Activated CD4-positive, alpha-beta memory T cell treated with anti-CD3 and anti-CD28 coated beads, Interleukin-2, amount 10 ng/mL, durations not matched to agents 7 days and 5 days (primary cell): ENCODE measurements at regions of chr17 and their contacts with region 1.

Region 1: DNA sequence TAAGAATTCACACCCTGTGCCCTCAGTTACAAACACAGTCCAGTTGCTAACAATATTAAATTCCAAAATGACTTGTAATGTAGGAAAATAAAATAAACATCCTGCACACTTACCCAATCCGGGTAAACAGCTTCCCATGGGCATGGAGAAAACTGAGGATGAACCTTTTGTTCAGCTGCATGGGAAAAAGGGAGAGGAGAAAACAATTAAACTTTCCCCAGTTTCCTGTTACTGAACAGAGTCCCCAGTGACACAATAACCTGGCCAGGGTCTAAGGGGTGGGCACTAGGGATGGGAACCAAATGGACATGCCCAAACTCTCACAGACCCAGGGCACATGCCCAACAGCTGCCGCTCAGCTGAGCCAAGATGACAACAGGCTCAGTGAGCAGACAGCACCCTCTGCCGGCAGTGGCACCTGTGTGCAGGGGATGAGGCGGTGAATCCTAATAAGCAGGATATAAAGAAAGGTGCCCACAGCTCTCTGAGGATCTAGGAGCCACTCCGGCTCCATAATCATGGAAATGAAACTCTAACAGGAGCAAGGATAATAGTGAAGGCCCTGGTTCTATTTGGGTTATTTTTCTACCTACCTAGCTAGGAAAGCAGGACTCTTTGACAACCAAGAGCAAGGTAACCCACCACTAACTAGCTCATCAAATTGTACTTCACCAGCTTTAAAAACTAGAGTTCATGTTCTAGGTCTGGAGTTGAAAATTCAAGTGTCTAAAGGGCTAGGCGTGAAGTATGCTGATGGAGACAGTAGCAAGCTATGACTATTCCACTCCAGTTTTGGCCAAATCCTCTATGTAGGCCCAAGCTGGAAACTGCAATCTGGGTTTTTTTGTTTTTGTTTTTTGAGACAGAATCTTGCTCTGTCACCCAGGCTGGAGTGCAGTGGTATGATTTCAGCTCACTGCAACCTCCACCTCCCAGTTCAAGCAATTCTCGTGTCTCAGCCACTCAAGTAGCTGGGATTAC is 58.8 kb downstream of the SMG6 start:
- DNase-seq: peak; percentile 87
- H3K4me3 Mint-ChIP-seq: no peak overlapping the region
- H3K27ac Mint-ChIP-seq: peak overlapping the region; percentile 69
- H3K4me1 Mint-ChIP-seq: peaks cover 70% of the 10 kb centered on the region
- H3K27me3 Mint-ChIP-seq: no peaks in the 10 kb centered on the region

Region 2: DNA sequence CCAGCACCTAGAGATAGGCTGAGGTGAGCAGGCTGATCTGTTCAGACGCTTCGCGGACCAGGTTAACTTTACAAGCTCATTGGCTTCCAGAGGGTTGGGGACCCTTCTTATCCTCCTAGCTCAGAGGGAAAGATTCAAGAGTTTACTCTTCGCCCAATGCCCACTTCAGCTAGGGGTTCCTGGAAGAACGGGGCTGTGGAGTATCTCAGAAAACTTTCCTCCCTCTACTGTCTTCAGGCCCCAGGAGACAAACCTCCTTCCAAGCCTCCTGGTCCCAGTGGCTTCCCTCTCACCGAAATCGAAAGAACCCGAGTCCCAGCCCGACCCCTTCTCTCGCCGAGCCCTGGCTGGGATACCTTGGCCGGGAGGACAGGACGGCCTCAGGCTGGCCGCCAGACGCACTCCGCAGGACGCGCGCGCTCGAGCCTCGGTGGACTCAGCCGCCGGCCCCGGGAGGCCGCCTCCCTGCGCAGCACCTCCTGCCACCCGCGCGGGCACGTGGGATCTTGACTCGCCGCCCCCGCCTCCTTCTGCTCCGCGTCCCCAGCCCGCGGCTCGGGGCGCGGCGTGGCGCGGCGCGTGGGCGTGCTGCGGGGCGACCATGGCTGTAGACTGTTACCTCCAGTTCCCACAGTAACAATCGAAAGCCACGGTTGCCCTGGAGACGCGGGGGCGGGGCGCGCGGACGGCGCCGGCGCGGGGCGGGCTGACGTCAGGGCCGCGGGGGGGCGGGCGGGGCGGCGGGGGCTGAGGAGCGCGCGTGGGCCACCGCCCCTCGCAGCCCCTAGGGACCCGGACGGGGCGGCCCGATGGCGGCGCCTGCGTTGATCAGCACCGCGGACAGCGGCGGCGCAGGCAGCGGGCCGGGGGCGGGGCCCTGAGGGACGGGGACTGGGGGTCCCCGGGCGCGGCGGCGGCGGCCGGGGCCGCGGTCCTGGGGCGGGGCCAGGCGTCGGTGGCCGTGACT is 195.2 kb before region 1 on chr17:
- CTCF ChIA-PET with region 1: interaction called, 210 read pairs
- POLR2A ChIA-PET with region 1: interaction called, 94 read pairs
- DNase-seq: peak; percentile 91
- H3K4me3 Mint-ChIP-seq: peak overlapping the region; percentile 65
- H3K27ac Mint-ChIP-seq: no peak overlapping the region
- H3K4me1 Mint-ChIP-seq: peaks cover 28% of the 10 kb centered on the region
- H3K27me3 Mint-ChIP-seq: peaks cover 22% of the 10 kb centered on the region

Region 3: DNA sequence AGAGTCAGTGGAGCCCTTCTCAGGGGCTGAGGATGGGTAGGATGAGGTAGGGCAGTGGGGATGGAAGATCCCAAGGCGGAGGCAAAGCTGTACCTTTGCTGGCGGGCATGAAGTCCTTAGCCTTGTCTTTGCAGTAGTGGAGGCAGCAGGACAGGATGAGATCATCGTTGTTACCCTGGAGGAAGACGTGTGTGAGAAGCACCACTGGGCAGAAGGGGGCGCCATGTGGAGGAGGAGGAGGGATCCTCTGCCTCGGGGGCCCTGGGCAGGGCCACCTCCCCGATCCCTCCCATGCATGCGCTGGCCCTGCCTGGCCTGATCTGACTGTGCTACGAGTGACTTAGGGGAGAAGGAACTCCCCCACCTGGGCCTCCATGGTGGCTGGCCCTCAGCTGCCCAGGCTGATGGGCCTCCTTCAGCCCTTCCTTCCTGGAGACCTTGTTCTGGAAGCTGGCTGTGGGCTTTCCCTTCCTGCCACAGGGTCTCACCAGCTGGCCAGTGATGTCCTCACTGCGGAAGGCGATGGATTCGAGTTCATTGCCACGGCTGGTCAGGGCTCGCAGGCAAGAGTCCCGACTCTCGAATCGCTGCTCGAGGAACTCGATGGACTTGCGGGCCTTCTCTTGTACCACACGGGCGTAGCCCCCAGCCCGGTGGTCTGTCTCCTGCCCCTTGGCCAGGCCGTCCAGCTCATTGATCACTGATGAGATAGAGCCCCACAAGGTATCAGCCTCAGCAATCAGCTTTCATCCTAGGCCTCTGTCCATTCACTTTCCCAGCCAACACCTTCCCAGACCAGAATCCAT is 179.7 kb before region 1 on chr17:
- CTCF ChIA-PET with region 1: interaction called, 210 read pairs
- POLR2A ChIA-PET with region 1: interaction called, 3 read pairs
- DNase-seq: peak; percentile 80
- H3K4me3 Mint-ChIP-seq: no peak overlapping the region
- H3K27ac Mint-ChIP-seq: peak overlapping the region; percentile 74
- H3K4me1 Mint-ChIP-seq: peaks cover 85% of the 10 kb centered on the region
- H3K27me3 Mint-ChIP-seq: no peaks in the 10 kb centered on the region

Region 4: GRCh38 chr17:2081564-2081963 is 163.3 kb before region 1 on chr17:
- CTCF ChIA-PET with region 1: interaction called, 27 read pairs
- POLR2A ChIA-PET with region 1: no interaction called
- DNase-seq: no peak
- H3K4me3 Mint-ChIP-seq: no peak overlapping the region
- H3K27ac Mint-ChIP-seq: no peak overlapping the region
- H3K4me1 Mint-ChIP-seq: peaks cover 56% of the 10 kb centered on the region
- H3K27me3 Mint-ChIP-seq: no peaks in the 10 kb centered on the region

Region 5: GRCh38 chr17:2222901-2223616 is 21.8 kb before region 1 on chr17:
- CTCF ChIA-PET with region 1: interaction called, 10 read pairs
- POLR2A ChIA-PET with region 1: interaction called, 6 read pairs
- DNase-seq: peak; percentile 73
- H3K4me3 Mint-ChIP-seq: no peak overlapping the region
- H3K27ac Mint-ChIP-seq: peak overlapping the region; percentile 55
- H3K4me1 Mint-ChIP-seq: peaks cover 40% of the 10 kb centered on the region
- H3K27me3 Mint-ChIP-seq: peaks cover 3% of the 10 kb centered on the region

Region 6: DNA sequence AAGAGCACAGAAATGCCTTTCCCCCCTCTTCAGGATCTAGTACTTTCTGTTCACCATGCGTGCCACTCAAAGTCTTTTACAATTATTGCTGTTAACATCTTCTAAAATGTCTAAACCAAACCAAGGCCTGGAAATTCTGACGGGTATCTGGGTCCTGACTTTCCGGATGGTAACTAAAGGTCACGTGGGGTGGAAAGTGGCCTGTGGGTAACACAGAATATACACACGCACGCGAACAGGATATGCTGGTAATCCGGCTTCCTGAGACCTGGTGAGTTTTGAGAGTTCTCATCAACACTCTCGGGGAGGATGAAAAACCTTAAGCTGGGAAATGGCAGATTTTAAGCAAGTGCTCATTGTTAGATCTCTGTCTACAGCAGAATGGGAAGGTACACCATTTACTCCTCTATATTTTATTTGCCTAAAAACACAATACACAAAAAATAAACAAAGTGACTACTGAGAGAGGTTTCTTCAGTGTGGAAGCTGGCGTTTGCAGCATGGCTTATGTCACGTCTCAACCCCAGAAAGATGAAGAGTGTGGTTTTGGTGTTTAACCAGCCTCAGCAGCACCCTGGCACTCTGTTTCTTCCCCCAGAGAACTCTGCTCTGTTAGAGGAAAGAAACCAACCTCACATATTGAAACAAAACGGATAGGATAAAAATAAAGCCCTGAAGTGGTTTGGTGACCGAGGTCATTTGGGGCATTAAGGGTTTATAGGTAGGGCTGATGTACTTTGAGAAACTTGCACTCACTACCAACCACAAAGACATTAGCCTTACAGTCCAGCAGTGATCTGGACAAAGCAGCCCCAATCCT is 21.4 kb after region 1 on chr17:
- CTCF ChIA-PET with region 1: interaction called, 39 read pairs
- POLR2A ChIA-PET with region 1: interaction called, 159 read pairs
- DNase-seq: peak; percentile 94
- H3K4me3 Mint-ChIP-seq: peak overlapping the region; percentile 79
- H3K27ac Mint-ChIP-seq: peak overlapping the region; percentile 100
- H3K4me1 Mint-ChIP-seq: peaks cover 80% of the 10 kb centered on the region
- H3K27me3 Mint-ChIP-seq: no peaks in the 10 kb centered on the region

Region 7: DNA sequence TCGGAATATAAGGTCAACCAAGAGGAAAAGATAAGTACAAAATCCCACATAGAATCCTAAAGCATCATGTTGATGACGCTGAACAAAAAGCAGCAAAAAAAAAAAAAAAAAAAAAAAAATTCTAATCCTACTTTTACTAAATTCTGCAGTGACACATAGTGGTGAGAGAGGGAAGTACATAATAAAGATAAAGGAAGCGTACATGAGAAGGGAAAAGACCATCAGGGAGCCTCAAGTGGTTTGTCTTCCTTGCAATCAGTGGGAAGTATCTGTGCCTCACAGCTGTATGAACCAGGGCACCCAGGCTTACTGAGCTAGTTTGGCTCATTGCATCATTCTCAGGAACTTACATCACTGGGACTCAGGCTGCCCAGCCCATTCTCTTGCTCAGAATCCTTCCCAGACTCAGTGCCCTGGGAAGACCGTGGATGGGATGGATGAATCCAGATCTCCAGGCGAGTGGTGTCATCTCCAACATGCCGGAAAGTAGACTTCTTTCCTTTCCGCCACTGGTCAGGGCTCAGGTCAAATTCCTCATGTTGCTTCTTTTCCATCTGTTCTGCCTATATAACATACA is 37.5 kb after region 1 on chr17:
- CTCF ChIA-PET with region 1: interaction called, 22 read pairs
- POLR2A ChIA-PET with region 1: interaction called, 5 read pairs
- DNase-seq: no peak
- H3K4me3 Mint-ChIP-seq: no peak overlapping the region
- H3K27ac Mint-ChIP-seq: peak overlapping the region; percentile 56
- H3K4me1 Mint-ChIP-seq: peaks cover 48% of the 10 kb centered on the region
- H3K27me3 Mint-ChIP-seq: no peaks in the 10 kb centered on the region